ENCODE measurements at regions of chr11 and their contacts with region 1.

Region 1: DNA sequence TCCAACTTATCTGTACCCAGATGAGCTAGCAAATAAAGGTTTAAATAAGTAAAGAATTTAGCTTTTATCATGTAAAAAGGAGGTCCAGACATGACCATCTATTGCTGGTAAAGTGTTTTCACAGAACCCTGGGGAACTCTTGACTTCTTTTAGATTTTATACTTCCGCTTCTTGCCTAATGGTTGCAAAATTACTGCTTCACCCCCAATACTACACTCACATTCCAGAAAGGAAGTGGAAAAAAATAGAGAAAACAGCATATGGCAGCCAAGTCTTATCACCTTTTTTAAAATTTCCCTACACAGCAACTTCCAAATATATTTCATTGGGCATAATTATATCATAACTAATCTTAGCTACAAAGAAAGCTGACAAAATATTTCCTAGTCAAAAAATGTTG is 12.1 kb downstream of the BBOX1 start:
- DNase-seq: no peak
- H3K4me3 ChIP-seq: no peak overlapping the region
- H3K27ac ChIP-seq: no peak overlapping the region
- H3K4me1 ChIP-seq: no peaks in the 10 kb centered on the region
- H3K27me3 ChIP-seq: no peaks in the 10 kb centered on the region
- CTCF ChIP-seq: no peak
- EP300 ChIP-seq: no peak
- POLR2A ChIP-seq: no peak

Region 2: GRCh38 chr11:27025957-27026733 is 26.5 kb before region 1 on chr11:
- intact Hi-C with region 1: loop called (anchors 2 kb)
- DNase-seq: no peak
- H3K4me3 ChIP-seq: no peak overlapping the region
- H3K27ac ChIP-seq: no peak overlapping the region
- H3K4me1 ChIP-seq: no peaks in the 10 kb centered on the region
- H3K27me3 ChIP-seq: no peaks in the 10 kb centered on the region
- CTCF ChIP-seq: no peak
- EP300 ChIP-seq: no peak
- POLR2A ChIP-seq: no peak

Region 3: DNA sequence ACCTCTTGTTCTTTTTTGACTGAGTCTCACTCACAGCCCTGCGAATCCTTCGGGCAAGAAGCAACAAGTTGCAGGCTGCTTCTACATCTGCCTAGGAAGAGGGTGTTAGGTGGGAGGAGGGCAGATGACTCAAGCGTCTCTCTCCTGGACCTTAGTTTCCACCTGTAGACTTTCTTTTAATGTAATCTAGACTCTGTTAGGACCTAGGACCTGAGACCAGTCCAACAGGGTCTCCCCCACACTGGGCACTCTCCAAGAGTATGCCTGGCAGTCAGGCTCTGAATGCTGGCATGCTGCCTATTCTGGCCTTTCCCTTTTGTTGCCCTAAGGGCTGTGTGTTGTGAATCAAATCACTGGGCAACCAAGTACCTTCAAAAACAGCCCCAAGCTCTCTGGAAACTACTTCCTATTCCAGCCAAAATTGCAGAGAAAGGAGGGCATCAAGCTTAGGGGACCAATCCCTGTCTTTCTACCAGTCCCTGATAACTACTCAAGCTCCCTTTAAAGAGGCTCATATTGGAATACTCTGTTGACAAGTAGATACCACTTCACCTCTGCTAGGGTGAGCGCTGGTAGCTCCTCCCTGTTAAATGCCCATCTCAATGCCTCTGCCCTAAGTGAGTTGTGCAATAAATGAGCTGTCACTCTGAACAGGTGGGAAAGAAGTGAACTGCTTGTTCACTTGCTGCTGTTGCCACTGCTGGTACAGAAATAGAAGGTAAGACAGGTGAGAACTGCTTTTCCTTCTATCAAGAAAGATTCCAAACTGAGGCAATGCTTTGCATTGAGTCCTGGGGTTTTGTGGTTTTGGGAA is 12.2 kb before region 1 on chr11 and contains the start of gene BBOX1:
- intact Hi-C with region 1: no loop called
- DNase-seq: no peak
- H3K4me3 ChIP-seq: no peak within 1 kb of the TSS
- H3K27ac ChIP-seq: no peak within 1 kb of the TSS
- H3K4me1 ChIP-seq: peaks cover 0 to 24% (median 19%) of the 10 kb centered on the region in 4 donors
- H3K27me3 ChIP-seq: no peaks in the 10 kb centered on the region
- CTCF ChIP-seq: no peak
- EP300 ChIP-seq: no peak
- POLR2A ChIP-seq: no peak
- total RNA-seq, gene BBOX1: 0.50 TPM in 1 of 4 donors, not detected in the others

Region 4: DNA sequence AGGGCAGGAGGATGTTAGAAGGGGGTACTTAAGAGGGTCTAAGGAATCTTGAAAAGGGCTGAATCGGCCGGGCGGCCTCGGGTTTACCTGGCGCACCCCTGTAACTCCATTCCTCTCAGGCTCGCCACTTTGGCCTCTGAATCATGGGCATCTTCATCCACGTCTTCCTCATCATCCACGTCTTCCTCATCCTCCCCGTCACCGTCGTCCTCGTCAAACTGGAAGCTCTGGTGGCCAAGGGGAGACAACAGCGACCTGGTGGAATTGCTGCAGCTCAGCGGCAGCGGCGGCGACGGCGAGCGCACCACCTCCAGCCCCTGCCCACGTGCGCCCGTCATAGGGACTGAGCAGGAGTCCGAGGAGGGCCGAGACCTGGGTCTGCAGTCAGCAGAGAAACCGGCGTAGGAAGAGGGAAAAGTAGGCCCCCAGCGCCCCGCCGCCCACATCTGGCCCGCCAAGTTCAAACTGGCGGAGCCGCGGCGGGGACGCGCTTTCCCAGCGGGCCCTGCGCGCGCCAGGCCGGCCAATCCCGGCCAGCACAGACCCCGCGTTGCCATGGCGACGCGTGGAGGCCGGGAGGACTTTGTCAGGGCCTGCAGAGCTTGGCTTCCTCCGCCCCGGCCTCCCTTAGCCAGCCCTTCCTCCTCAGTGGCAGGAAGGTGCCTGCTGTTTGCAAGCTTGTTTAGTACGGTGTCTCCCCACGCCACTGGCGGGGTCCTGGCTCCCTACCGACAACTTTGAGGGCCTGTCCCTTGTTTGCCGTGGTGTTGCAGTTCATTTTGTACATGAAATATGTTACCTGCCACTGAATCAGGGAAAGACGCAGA is 310.3 kb after region 1 on chr11 and contains the start of gene CCDC34:
- intact Hi-C with region 1: no loop called
- DNase-seq: peak; percentile 95
- H3K4me3 ChIP-seq: peak within 1 kb of the TSS; percentile 68 to 74 (median 72)
- H3K27ac ChIP-seq: peak within 1 kb of the TSS in 3 of 4 donors; percentile 30 to 42 (median 42)
- H3K4me1 ChIP-seq: peaks cover 6 to 18% (median 15%) of the 10 kb centered on the region in 4 donors
- H3K27me3 ChIP-seq: no peaks in the 10 kb centered on the region
- CTCF ChIP-seq: no peak
- EP300 ChIP-seq: no peak
- POLR2A ChIP-seq: no peak
- total RNA-seq, gene CCDC34: 0.83 to 1.5 (median 1.2) TPM

Region 5: GRCh38 chr11:27592098-27592780 is 539.6 kb after region 1 on chr11:
- intact Hi-C with region 1: no loop called
- DNase-seq: no peak
- H3K4me3 ChIP-seq: no peak overlapping the region
- H3K27ac ChIP-seq: no peak overlapping the region
- H3K4me1 ChIP-seq: no peaks in the 10 kb centered on the region
- H3K27me3 ChIP-seq: no peaks in the 10 kb centered on the region
- CTCF ChIP-seq: no peak
- EP300 ChIP-seq: no peak
- POLR2A ChIP-seq: no peak